A673 (cell line): ENCODE measurements at regions of chr10 and their contacts with region 1.

Region 1: GRCh38 chr10:106355450-106355849 is 809.1 kb downstream of the SORCS1 start:
- DNase-seq: peak; percentile 36
- H3K4me3 ChIP-seq: no peak overlapping the region
- H3K27ac ChIP-seq: no peak overlapping the region
- H3K4me1 ChIP-seq: no peaks in the 10 kb centered on the region
- H3K27me3 ChIP-seq: no peaks in the 10 kb centered on the region
- CTCF ChIP-seq: peak; percentile 66

Region 2: GRCh38 chr10:106011250-106011649 is 344.2 kb before region 1 on chr10:
- CTCF ChIA-PET with region 1: interaction called, 11 read pairs
- POLR2A ChIA-PET with region 1: no interaction called
- intact Hi-C with region 1: no loop called
- DNase-seq: no peak
- H3K4me3 ChIP-seq: no peak overlapping the region
- H3K27ac ChIP-seq: no peak overlapping the region
- H3K4me1 ChIP-seq: no peaks in the 10 kb centered on the region
- H3K27me3 ChIP-seq: no peaks in the 10 kb centered on the region
- CTCF ChIP-seq: no peak